Ovary (tissue), 10 donors: ENCODE measurements at regions of chr3 and their contacts with region 1.

Region 1: DNA sequence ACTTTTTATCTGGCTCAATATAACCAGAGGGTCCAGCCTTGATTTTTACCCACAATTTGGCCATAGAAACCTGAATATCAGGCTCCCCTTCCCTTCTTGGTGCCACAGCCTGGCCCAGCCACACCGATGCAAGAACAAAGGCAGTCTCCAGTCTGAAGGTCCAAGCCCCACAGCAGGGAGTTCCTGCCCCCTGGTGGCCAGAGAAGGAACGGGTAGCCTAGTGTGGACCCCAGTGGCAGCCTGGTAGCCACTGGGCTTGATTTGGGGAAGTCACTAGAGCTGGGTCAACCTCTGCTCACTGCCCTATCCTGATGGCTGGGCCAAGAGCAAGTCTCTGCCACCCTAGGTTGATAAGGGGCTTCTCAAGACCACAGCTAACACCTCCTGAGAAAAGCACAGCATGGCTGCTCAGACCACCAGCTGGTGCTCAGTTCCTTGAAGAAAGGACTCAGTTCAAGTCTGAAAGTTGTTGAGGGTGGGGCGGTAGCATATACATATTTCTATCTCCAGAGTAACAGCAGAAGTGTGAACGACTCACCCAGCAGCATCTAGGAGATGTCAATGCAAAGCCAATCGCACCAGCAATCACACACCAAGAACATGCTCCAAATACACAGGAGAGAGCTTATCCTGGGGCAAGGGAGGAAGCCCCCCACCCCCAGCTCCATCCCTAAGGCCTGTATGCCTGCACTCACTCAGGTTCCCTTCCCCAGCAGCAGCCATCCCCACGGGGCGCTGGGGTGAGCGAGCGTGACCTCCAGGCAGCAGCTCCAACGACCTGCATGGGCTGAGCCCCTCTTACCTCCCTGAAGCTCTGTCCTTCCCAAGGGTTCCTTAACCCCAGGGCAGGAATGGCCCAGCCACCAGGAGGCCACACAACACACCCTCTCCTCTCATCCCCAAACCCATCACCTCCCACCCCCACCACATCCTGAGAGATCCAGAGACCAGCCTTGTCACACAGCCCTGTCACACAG is 7.6 kb downstream of the PFKFB4 start:
- DNase-seq: peak; percentile 75 to 89 (median 85)
- H3K4me3 ChIP-seq: no peak overlapping the region
- H3K27ac ChIP-seq: no peak overlapping the region
- H3K4me1 ChIP-seq: no peaks in the 10 kb centered on the region
- H3K27me3 ChIP-seq: no peaks in the 10 kb centered on the region
- CTCF ChIP-seq: peak; percentile 78 to 94 (median 92)
- EP300 ChIP-seq: no peak
- POLR2A ChIP-seq: peak; percentile 17

Region 2: DNA sequence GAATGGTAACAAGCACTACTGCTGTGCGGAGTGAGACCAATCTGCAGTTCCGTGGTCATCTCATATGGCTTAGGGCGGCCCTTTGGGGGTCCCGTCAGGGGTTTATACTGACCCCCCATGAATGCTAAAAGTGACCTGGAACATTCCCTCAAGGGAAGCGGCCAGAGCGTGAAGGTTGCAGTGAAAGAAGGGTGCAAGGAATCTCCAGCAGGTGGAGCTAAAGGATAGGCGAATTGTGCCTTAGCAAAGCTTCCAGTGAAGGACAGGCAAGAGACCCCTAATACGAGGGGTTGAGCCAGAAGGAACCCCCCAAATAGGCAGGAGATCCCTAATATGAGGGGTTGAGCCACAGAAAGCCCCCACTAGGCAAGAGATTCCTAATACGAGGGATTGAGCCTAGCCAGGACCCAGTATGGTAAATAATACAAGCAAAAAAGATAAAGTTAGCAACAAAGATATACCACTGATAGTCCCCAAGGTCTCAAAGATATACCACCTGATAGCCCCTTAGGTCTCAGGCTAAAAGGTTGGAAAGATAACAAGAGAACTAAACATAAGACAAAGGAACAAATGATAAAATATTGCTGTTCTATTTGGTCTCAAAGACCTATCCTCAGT is 275.3 kb before region 1 on chr3:
- intact Hi-C with region 1: loop called in 2 of 4 experiments (anchors 5 to 10 kb)
- DNase-seq: peak; percentile 34 to 52 (median 43)
- H3K4me3 ChIP-seq: no peak overlapping the region
- H3K27ac ChIP-seq: no peak overlapping the region
- H3K4me1 ChIP-seq: no peaks in the 10 kb centered on the region
- H3K27me3 ChIP-seq: no peaks in the 10 kb centered on the region
- CTCF ChIP-seq: peak; percentile 25 to 60 (median 60)
- EP300 ChIP-seq: no peak
- POLR2A ChIP-seq: no peak

Region 3: GRCh38 chr3:48400824-48401433 is 148.1 kb before region 1 on chr3:
- intact Hi-C with region 1: loop called in 2 of 4 experiments (anchors 5 to 10 kb)
- DNase-seq: peak; percentile 51 to 67 (median 56)
- H3K4me3 ChIP-seq: no peak overlapping the region
- H3K27ac ChIP-seq: no peak overlapping the region
- H3K4me1 ChIP-seq: peaks cover 2% of the 10 kb centered on the region
- H3K27me3 ChIP-seq: no peaks in the 10 kb centered on the region
- CTCF ChIP-seq: peak; percentile 66 to 89 (median 81)
- EP300 ChIP-seq: no peak
- POLR2A ChIP-seq: no peak

Region 4: DNA sequence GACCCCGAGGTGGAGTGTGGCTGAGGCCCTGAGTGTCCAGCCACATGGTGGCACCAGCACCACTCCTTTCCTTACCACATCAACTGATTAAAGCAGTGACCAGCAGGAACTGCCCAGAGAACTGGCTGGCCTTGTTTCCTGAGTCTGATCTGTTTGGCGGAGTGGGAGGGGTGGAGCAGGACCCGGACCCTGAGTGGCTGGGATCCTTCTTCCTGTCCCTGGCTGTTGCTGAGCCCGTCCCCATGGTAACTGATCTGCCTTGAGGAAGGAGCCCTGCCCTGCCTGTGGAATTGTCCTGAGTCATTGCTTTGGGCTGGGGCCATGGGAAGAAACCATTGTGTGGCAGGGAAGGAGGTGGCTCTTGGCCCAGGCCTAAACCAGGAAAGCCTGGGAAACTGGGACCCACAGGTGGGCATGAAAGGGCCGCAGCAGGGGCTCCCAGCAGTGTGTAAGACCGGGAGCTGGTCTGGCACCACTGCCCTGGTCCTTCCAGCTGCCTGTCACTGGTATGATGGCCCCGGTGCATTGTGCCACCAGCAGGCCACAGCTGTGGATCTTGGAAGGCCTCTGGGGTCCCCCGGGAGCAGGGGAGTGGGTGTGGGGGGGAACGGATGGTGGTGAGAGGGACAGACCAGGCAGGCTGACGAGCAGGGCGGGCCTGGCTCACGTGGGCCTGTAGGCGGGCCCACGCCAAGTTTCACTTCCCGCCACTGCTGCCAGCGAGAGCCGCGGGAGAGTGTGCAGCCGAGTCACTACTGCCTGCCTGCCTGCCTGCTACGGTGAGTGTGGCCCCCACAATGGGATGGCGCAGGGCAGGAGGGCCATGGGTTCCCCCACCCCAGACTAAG is 83.3 kb before region 1 on chr3:
- intact Hi-C with region 1: loop called (anchors 2 to 5 kb)
- DNase-seq: peak; percentile 92 to 99 (median 94)
- H3K4me3 ChIP-seq: peak overlapping the region; percentile 48
- H3K27ac ChIP-seq: peak overlapping the region; percentile 98 to 100
- H3K4me1 ChIP-seq: peaks cover 22% of the 10 kb centered on the region
- H3K27me3 ChIP-seq: no peaks in the 10 kb centered on the region
- CTCF ChIP-seq: peak; percentile 23 to 80 (median 77)
- EP300 ChIP-seq: peak; percentile 21
- POLR2A ChIP-seq: peak; percentile 90

Region 5: DNA sequence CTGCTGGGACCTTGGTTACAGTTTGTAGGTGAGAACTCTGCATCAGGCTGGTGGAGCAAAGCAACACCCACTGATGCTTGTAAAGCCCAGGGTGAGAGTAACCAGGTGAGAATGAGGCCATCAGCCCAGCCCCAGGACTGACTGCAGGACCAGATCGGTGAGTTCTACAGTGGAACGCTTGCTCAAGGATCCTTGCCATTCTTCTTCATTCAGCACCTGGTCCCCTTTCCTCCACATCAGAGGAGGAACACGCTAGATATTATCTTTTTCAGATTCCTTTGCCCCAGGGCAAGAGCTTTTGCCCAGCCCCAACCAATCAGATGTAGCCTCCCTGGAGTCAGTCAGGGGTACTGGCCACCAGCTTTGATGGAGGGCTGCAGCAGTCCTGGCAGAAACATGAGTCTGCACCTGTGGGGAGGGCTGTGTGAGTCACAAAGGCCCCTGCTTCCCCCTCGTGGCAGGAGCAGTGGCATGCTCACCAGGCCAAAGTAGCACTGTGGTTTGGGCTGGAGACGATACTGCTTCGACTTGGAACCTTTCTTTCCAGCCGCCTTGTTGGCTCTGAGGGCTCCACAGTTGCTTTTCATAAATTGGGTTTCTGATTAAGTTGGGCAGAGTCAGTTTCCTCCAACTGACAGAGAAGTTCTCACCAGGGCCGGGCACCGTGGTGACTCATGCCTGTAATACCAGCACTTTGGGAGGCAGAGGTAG is 41.5 kb before region 1 on chr3:
- intact Hi-C with region 1: loop called in 1 of 4 experiments (anchors 5 kb)
- DNase-seq: no peak
- H3K4me3 ChIP-seq: no peak overlapping the region
- H3K27ac ChIP-seq: no peak overlapping the region
- H3K4me1 ChIP-seq: peaks cover 13% of the 10 kb centered on the region
- H3K27me3 ChIP-seq: no peaks in the 10 kb centered on the region
- CTCF ChIP-seq: no peak
- EP300 ChIP-seq: no peak
- POLR2A ChIP-seq: no peak